Tibial artery (tissue), 4 donors: ENCODE measurements at regions of chr14 and their contacts with region 1.

Region 1: GRCh38 chr14:105255021-105255507 is 6.7 kb downstream of the BTBD6 start:
- DNase-seq: peak in 1 of 2 donors; percentile 55
- H3K4me3 ChIP-seq: no peak overlapping the region
- H3K27ac ChIP-seq: no peak overlapping the region
- H3K4me1 ChIP-seq: peaks cover 0 to under 1% (median under 1%) of the 10 kb centered on the region in 4 donors
- H3K27me3 ChIP-seq: no peaks in the 10 kb centered on the region
- CTCF ChIP-seq: no peak

Region 2: DNA sequence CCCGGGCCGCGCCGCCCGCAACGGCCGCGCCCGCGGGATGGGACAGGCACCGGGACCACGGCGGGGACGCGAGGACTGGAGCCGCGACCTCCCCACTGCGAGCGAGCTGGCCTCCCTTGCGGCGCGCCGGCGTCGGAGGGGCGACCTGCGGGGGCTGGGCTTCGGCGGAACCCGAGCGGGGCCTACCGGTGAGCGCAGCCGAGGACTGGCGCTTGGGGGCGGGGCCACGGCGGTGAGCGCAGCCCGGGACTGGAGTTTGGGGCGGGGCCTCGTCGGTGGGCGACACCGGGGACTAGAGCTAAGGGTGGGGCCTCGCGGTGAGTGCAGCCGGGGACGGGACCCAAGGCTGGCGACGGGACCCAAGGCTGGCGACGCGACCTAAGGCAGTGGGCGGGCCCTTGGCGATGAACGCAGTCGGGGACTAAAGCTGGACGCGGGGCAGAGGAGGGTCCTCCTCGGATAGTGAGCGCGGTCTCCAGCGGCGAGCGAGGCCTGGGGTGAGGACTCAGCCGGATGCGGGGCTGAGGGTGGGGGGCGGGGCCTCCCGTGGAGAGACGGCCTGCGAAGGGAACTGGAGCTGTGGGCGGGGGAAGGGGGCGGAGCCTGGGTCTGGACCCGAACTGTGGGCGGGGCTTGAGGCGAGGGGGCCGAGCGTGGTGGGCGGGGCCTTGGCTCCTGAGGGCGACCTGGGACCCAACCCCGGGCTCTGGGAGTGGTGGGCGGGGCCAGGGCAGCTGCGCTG is 45.9 kb after region 1 on chr14 and contains the start of gene BRF1:
- intact Hi-C with region 1: no loop called
- DNase-seq: peak; percentile 97 to 98
- H3K4me3 ChIP-seq: peak within 1 kb of the TSS; percentile 60 to 69
- H3K27ac ChIP-seq: peak within 1 kb of the TSS; percentile 85 to 87
- H3K4me1 ChIP-seq: peaks cover 0 to 23% (median 15%) of the 10 kb centered on the region in 4 donors
- H3K27me3 ChIP-seq: no peaks in the 10 kb centered on the region
- CTCF ChIP-seq: no peak

Region 3: GRCh38 chr14:105314287-105315200 is 59.5 kb after region 1 on chr14 and contains the start of gene PACS2:
- intact Hi-C with region 1: loop called (anchors 10 kb)
- DNase-seq: peak; percentile 57 to 86
- H3K4me3 ChIP-seq: peak within 1 kb of the TSS; percentile 94 to 96
- H3K27ac ChIP-seq: peak within 1 kb of the TSS; percentile 93 to 100
- H3K4me1 ChIP-seq: peaks cover 0 to 39% (median 30%) of the 10 kb centered on the region in 4 donors
- H3K27me3 ChIP-seq: no peaks in the 10 kb centered on the region
- CTCF ChIP-seq: no peak